ENCODE measurements at regions of chr5 and their contacts with region 1.

Region 1: DNA sequence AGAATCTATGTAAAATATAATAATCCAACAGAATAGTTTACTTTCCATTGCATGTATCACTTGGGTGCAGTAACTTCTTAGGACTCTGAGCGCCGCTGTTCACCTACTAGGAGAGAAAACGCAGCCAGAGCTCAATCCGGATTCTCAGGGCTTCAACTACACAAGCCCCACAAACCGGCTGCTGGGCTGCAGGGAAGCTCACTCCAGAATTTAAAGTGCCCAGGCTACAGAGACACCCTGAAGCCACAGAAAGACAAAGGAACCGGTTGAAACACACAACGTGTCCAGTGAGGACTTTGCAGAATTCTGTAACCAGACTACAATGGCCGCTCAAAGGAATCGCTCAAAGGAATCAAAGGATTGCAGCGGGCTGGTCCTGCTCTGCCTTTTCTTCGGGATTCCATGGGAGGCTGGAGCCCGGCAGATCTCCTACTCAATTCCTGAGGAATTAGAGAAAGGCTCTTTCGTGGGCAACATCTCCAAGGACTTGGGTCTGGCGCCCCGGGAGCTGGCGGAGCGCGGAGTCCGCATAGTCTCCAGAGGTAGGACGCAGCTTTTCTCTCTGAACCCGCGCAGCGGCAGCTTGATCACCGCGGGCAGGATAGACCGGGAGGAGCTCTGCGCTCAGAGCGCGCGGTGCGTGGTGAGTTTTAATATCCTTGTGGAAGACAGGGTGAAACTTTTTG is at the start of gene PCDHGA10:
- DNase-seq: peak; percentile 49 to 61 (median 54)
- ATAC-seq: peak; percentile 91
- H3K4me3 ChIP-seq: peak within 1 kb of the TSS; percentile 21
- H3K27ac ChIP-seq: no peak within 1 kb of the TSS
- H3K4me1 ChIP-seq: peaks cover 0 to 27% of the 10 kb centered on the region in 2 experiments; a peak in 2 of 5 replicates
- H3K27me3 ChIP-seq: peaks cover 7 to 33% of the 10 kb centered on the region in 2 experiments; a peak in 4 of 5 replicates
- CTCF ChIP-seq: peak; percentile 66 to 78 (median 72)
- EP300 ChIP-seq: no peak
- POLR2A ChIP-seq: no peak
- RAD21 ChIP-seq: peak; percentile 34 to 66
- polyA plus RNA-seq, gene PCDHGA10: 0.01 to 0.04 TPM

Region 2: DNA sequence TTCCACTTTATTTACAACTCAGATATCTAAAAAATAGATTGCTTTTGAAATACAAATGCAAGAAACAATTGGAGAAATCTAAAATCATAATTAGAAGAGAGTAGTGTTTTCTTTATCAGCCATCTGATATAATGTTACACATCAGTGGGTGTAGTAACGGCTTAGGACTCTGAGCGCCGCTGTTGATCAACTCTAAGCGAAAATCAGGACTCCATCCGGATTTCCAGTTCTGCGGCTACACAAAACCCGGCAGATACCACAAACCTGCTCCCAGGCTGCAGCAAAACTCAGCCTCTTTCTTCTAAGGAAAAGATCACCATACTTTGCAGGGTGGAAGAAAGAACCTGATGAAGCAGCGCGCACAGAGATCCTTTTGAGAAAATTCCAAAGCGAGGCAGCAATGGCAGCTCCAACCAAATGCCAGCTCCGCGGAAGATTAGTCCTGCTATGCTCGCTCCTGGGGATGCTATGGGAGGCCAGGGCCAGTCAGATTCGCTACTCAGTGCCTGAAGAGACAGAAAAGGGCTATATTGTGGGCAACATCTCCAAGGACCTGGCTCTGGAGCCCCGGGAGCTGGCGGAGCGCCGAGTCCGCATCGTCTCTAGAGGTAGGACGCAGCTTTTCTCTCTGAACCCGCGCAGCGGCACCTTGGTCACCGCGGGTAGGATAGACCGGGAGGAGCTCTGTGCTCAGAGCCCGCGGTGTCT is 10.3 kb before region 1 on chr5 and contains the start of gene PCDHGA9:
- CTCF ChIA-PET with region 1: no interaction called
- POLR2A ChIA-PET with region 1: no interaction called
- in situ Hi-C with region 1: no loop called
- intact Hi-C with region 1: no loop called
- DNase-seq: peak; percentile 34 to 60 (median 38)
- ATAC-seq: peak; percentile 78
- H3K4me3 ChIP-seq: no peak within 1 kb of the TSS
- H3K27ac ChIP-seq: no peak within 1 kb of the TSS
- H3K4me1 ChIP-seq: peaks cover 0 to 9% of the 10 kb centered on the region in 2 experiments; a peak in 3 of 5 replicates
- H3K27me3 ChIP-seq: peaks cover 3 to 30% of the 10 kb centered on the region in 2 experiments; a peak in 3 of 5 replicates
- CTCF ChIP-seq: peak; percentile 56 to 61 (median 59)
- EP300 ChIP-seq: no peak
- POLR2A ChIP-seq: no peak
- RAD21 ChIP-seq: peak in 1 of 2 experiments; percentile 41; a peak in 2 of 4 replicates
- polyA plus RNA-seq, gene PCDHGA9: not detected

Region 3: GRCh38 chr5:141475625-141476131 is 62.7 kb after region 1 on chr5 and contains the start of gene PCDHGC3:
- CTCF ChIA-PET with region 1: no interaction called
- POLR2A ChIA-PET with region 1: no interaction called
- in situ Hi-C with region 1: no loop called
- intact Hi-C with region 1: no loop called
- DNase-seq: peak in 2 of 4 experiments; percentile 16 to 34
- ATAC-seq: peak; percentile 82
- H3K4me3 ChIP-seq: no peak within 1 kb of the TSS
- H3K27ac ChIP-seq: no peak within 1 kb of the TSS
- H3K4me1 ChIP-seq: peaks cover 0 to 14% of the 10 kb centered on the region in 2 experiments; a peak in 1 of 5 replicates
- H3K27me3 ChIP-seq: peaks cover 20 to 32% of the 10 kb centered on the region in 2 experiments; a peak in 4 of 5 replicates
- CTCF ChIP-seq: no peak; a peak in 1 of 6 replicates
- EP300 ChIP-seq: no peak
- POLR2A ChIP-seq: no peak
- RAD21 ChIP-seq: peak in 1 of 2 experiments; percentile 28; a peak in 1 of 4 replicates
- polyA plus RNA-seq, gene PCDHGC3: not detected

Region 4: DNA sequence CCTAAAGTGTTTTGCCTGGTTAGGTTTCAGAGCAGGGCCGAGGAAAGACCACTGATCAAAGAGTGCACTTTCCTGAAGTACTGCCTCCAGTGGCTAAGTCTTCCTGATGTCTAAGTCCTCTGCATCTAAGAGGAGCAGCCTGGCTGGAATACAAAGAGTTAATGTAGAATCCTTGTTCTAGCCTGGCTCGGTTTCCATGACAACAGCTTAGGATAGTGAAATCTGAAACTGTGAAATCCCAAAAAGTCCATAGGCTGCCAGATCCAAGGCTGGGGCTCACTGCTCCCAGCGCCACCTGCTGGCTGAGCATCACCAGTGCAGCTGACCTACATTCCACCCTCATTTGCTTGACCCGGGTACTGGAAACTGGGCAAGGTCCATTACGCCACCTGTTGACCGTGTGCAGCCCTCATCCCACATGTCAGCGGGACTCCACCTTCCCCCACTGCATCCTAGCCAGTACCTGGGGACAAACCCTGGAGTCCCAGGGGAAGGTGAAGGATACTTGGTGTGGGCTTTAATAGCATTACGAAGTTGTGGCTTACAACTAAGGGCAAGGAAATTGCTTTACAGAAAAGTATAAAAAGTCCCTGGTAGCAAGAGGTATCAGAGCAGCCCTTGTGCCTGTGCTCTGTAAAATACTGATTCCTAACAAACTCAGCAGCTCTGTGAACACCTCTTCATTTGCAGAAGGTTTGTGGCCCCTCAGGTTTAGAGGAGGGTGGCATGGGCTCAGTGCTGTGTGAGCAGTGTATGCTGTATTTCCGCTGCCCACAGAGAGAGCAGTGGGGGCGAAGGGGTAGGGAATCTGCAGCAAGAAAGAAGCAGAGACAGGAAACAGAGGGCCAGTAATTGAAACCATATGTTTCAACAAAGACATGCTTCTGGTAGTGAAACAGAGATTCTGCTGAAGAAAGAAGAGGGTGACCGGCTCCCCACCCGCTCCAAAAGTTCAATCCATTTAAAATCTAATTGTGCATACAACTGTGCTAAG is 111.9 kb after region 1 on chr5:
- CTCF ChIA-PET with region 1: interaction called, 3 read pairs
- POLR2A ChIA-PET with region 1: no interaction called
- in situ Hi-C with region 1: no loop called
- intact Hi-C with region 1: loop called (anchors 5 kb)
- DNase-seq: peak; percentile 79 to 86 (median 84)
- ATAC-seq: peak; percentile 94
- H3K4me3 ChIP-seq: no peak overlapping the region
- H3K27ac ChIP-seq: no peak overlapping the region
- H3K4me1 ChIP-seq: peaks cover 0 to 7% of the 10 kb centered on the region in 2 experiments; a peak in 2 of 5 replicates
- H3K27me3 ChIP-seq: no peaks in the 10 kb centered on the region
- CTCF ChIP-seq: peak; percentile 98 to 99 (median 99)
- EP300 ChIP-seq: peak; percentile 20; the same call in 1 of the 2 replicates
- POLR2A ChIP-seq: no peak
- RAD21 ChIP-seq: peak; percentile 82 to 85

Measured in K562 (cell line).